ENCODE measurements at regions of chr1 and their contacts with region 1.

Region 1: GRCh38 chr1:7667625-7668218 is 103.4 kb upstream of the VAMP3 start:
- DNase-seq: peak; percentile 66 to 75
- ATAC-seq: peak; percentile 75 to 88
- H3K4me3 ChIP-seq: no peak overlapping the region
- H3K27ac ChIP-seq: peak overlapping the region in 1 of 2 experiments; percentile 61; a peak in 2 of 6 replicates
- H3K4me1 ChIP-seq: 0 out of 3 replicates have a peak, but pooled peaks cover 3% of the 10 kb centered on the region
- CTCF ChIP-seq: peak; percentile 91
- EP300 ChIP-seq: no peak
- POLR2A ChIP-seq: no peak
- RAD21 ChIP-seq: peak; percentile 93 to 96

Region 2: GRCh38 chr1:7646981-7647901 is 20.5 kb before region 1 on chr1:
- CTCF ChIA-PET with region 1: interaction called, 21 read pairs
- POLR2A ChIA-PET with region 1: no interaction called
- DNase-seq: peak; percentile 46 to 88
- ATAC-seq: peak; percentile 69 to 92; a peak in 5 of 6 replicates
- H3K4me3 ChIP-seq: no peak overlapping the region
- H3K27ac ChIP-seq: peak overlapping the region; percentile 55 to 92
- H3K4me1 ChIP-seq: peaks cover 4% of the 10 kb centered on the region; the same call in 2 of the 3 replicates
- CTCF ChIP-seq: peak; percentile 83
- EP300 ChIP-seq: no peak
- POLR2A ChIP-seq: no peak
- RAD21 ChIP-seq: peak; percentile 90 to 97

Region 3: DNA sequence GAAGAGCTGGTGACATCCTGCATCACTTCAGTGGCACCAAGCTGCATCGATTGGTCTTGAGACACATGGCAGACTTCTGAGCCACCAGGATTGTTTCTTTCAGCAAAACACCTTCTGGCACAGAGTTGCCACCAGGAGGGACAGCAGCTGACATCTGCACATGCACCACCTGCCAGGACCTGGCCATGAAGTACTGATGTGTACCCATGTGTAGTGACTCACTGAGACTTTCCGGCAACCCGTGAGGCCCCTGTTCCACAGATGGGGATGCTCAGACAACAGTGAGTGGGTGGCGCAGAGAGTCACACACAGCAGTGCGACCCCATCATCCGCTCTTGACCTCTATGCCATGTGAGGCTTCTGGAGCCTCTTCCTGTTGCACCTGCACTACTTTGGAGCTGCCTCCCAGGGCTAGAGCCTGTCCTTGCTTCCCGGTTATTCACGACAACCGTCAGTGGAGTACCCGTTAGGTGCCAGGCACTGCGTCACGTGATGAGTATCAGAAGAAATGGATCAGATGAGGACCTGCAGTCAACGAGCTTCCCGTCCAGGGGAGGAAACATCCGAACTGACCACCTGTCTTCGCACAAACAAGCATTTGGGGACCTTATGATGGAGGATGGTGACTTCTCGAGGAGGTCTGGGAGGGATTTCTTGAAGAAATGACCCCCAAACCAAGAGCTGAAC is 22.9 kb after region 1 on chr1:
- CTCF ChIA-PET with region 1: interaction called, 124 read pairs
- POLR2A ChIA-PET with region 1: no interaction called
- DNase-seq: no peak
- ATAC-seq: no peak
- H3K4me3 ChIP-seq: no peak overlapping the region
- H3K27ac ChIP-seq: no peak overlapping the region
- H3K4me1 ChIP-seq: no peaks in the 10 kb centered on the region
- CTCF ChIP-seq: no peak
- EP300 ChIP-seq: no peak
- POLR2A ChIP-seq: no peak
- RAD21 ChIP-seq: no peak

Region 4: GRCh38 chr1:7721940-7722669 is 54.4 kb after region 1 on chr1:
- CTCF ChIA-PET with region 1: interaction called, 14 read pairs
- POLR2A ChIA-PET with region 1: no interaction called
- DNase-seq: no peak
- ATAC-seq: no peak
- H3K4me3 ChIP-seq: no peak overlapping the region
- H3K27ac ChIP-seq: no peak overlapping the region
- H3K4me1 ChIP-seq: no peaks in the 10 kb centered on the region
- CTCF ChIP-seq: no peak
- EP300 ChIP-seq: no peak
- POLR2A ChIP-seq: no peak
- RAD21 ChIP-seq: no peak

Region 5: DNA sequence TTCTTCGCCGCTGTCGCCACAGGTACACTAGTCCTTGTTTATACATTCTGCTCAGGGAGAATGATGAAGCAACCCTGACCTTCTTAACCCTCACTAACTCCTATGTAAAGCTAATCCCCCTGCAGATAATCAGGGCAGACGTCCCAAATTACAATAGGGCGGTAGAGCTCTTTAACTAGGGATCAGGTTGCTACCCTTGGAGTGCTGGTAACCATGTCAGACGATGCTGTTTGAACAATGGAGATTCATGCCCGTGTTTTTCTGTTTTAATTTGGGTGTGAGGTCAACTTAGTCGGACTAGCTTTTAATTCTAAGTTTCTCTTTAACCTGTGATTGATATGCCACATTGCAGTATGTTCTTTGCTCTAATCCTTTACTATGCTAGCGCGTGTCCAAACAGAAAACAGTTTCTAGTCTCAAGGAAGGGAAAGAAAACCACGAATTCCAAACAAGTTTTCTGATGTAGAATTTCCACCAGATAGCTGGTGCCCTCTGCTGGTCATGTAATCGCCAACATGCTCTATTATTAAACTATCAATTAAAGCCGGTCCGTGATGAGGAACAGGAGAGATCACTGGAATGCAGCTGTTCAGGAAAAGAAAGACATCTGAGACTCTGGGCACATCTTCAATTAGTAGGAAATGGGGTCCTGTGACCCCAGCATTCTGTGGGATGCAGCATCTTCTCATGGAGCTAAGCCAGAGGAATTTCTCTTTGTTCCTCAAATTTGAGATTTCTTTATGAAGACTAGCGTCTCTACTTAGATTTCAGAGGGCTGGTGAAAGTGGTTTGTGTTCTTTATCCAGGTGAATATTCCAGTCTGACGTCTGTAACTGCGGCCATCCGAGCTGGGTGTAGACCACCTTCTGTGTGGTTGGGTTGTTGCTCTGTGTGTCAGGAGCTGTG is 85.0 kb after region 1 on chr1:
- CTCF ChIA-PET with region 1: interaction called, 410 read pairs
- POLR2A ChIA-PET with region 1: interaction called, 6 read pairs
- DNase-seq: peak; percentile 25 to 53
- ATAC-seq: peak; percentile 76 to 78; a peak in 5 of 6 replicates
- H3K4me3 ChIP-seq: peak overlapping the region; percentile 35
- H3K27ac ChIP-seq: peak overlapping the region in 1 of 2 experiments; percentile 11; a peak in 1 of 6 replicates
- H3K4me1 ChIP-seq: no peaks in the 10 kb centered on the region
- CTCF ChIP-seq: peak; percentile 83
- EP300 ChIP-seq: no peak
- POLR2A ChIP-seq: no peak
- RAD21 ChIP-seq: peak; percentile 76 to 82

Region 6: GRCh38 chr1:7902478-7903085 is 234.9 kb after region 1 on chr1:
- CTCF ChIA-PET with region 1: interaction called, 16 read pairs
- POLR2A ChIA-PET with region 1: no interaction called
- DNase-seq: peak; percentile 70 to 71
- ATAC-seq: peak; percentile 93 to 98
- H3K4me3 ChIP-seq: no peak overlapping the region
- H3K27ac ChIP-seq: peak overlapping the region; percentile 42 to 45; a peak in 2 of 6 replicates
- H3K4me1 ChIP-seq: no peaks in the 10 kb centered on the region
- CTCF ChIP-seq: peak; percentile 62
- EP300 ChIP-seq: no peak
- POLR2A ChIP-seq: no peak
- RAD21 ChIP-seq: peak; percentile 77 to 81